Left ventricle myocardium inferior (tissue), 1 donor: ENCODE measurements at regions of chr4 and their contacts with region 1.

Region 1: DNA sequence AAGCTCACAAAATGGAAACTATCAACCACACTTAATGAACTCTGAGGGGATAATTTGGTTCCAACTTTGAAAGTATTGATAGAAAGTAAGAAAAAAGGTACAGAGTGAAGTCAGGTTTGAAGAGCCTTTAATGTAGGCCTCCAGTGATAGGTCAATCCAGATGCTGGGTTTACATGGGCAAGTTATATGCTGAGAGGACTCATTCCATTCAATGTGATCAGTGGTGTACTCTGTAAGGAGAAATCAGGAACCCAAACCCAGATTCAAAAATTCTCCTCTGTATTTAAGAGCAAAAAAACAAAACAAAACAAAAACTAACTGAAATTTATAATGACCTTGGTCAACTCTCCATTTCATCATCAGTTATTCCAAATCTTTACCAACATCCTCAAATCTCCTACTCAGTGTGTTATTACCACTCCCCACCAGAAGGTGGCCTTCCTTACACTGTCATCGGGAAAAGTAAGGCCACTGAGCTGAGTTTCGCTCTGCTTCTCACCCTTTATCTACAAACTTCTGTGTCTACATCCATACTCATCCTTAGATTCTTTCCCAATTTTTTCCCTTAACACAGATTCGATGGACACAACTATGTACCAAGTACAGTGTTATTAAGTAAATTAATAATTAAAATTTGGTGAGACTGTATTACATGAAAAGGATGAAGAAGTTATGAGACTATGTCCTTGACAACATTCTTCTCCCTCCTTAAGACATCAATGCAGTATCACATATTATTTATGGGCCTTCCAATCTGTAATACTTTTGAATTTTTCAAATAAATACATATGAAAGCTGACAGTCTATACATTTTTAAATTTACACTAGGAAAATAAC is 88.3 kb downstream of the ZAR1 start:
- DNase-seq: no peak
- H3K4me3 ChIP-seq: no peak overlapping the region
- H3K27ac ChIP-seq: no peak overlapping the region
- H3K4me1 ChIP-seq: no peaks in the 10 kb centered on the region
- H3K27me3 ChIP-seq: no peaks in the 10 kb centered on the region
- CTCF ChIP-seq: peak; percentile 92

Region 2: GRCh38 chr4:48681856-48682255 is 103.5 kb after region 1 on chr4:
- intact Hi-C with region 1: loop called (anchors 5 kb)
- DNase-seq: no peak
- H3K4me3 ChIP-seq: no peak overlapping the region
- H3K27ac ChIP-seq: peak overlapping the region; percentile 24
- H3K4me1 ChIP-seq: peaks cover 40% of the 10 kb centered on the region
- H3K27me3 ChIP-seq: no peaks in the 10 kb centered on the region
- CTCF ChIP-seq: peak; percentile 64

Region 3: DNA sequence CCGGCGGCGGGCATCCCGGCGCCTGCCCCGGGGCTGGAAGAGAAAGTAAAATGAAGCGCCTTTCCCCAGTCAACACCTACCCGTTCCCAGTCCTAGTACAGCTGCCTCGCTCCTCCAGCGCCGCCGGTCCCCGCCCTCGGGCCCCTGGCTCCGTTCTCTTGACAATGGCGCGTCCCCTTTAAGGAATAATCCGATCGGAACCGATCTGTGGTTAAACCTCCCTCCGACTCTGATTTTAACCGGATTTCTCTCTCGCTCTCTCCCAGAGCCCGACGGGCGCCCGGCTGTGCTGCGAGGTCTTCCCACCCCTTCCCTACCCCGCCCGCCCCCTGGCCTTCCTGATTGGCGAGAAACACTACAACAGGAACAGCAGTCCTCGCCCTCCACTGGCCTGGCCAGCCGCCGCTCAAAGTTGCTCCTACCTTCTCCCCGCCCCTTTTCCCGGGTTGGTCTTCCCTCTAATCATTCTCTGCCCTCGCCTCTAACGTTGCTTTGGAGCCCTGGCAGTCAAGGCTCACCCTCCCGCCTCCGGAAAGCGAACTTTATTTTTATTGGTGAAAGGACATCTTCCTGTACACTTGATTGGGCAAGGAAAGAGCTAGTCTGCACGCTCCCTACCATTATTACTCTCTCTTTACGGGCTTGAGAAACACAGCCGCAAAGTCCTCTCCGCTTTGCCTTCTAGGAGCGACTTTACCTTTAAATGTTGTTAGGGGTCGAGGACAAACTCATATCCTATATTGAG is 201.8 kb after region 1 on chr4 and contains the start of gene FRYL:
- intact Hi-C with region 1: loop called (anchors 10 kb)
- DNase-seq: peak; percentile 100
- H3K4me3 ChIP-seq: peak within 1 kb of the TSS; percentile 97
- H3K27ac ChIP-seq: peak within 1 kb of the TSS; percentile 95
- H3K4me1 ChIP-seq: peaks cover 56% of the 10 kb centered on the region
- H3K27me3 ChIP-seq: no peaks in the 10 kb centered on the region
- CTCF ChIP-seq: no peak
- total RNA-seq, gene FRYL: 33.2 TPM

Region 4: DNA sequence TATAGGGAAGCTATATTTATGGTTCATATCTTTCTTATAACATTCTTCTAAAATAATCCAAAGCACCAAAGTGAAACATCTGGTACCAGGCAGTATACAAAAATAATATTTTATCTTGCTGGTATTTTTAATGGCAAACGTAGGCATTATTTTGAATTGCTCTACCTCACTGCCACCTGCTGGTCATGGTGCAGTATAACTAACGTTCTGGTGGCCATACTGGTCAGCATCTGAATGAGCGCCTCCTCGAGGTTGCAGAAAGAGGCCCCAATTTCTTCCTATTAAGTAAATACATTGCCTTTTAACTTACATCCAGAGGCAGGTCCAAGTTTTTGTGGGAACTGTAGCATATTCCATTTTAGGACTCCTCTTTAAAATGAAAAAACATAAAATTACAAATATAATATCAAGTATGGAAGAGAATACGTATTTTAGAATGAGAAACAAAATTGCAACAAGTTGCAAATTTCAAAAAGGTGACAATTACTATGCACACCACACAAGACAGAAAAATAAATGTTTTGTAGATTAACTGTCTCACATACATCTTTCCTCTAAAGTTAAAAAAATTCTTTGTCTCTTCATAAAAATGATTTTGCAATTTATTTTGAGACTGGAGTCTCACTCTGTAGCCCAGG is 384.8 kb after region 1 on chr4:
- intact Hi-C with region 1: loop called (anchors 5 kb)
- DNase-seq: peak; percentile 17
- H3K4me3 ChIP-seq: no peak overlapping the region
- H3K27ac ChIP-seq: no peak overlapping the region
- H3K4me1 ChIP-seq: peaks cover 3% of the 10 kb centered on the region
- H3K27me3 ChIP-seq: no peaks in the 10 kb centered on the region
- CTCF ChIP-seq: peak; percentile 95